Colonic mucosa (tissue), 4 donors: ENCODE measurements at regions of chr18 and their contacts with region 1.

Region 1: DNA sequence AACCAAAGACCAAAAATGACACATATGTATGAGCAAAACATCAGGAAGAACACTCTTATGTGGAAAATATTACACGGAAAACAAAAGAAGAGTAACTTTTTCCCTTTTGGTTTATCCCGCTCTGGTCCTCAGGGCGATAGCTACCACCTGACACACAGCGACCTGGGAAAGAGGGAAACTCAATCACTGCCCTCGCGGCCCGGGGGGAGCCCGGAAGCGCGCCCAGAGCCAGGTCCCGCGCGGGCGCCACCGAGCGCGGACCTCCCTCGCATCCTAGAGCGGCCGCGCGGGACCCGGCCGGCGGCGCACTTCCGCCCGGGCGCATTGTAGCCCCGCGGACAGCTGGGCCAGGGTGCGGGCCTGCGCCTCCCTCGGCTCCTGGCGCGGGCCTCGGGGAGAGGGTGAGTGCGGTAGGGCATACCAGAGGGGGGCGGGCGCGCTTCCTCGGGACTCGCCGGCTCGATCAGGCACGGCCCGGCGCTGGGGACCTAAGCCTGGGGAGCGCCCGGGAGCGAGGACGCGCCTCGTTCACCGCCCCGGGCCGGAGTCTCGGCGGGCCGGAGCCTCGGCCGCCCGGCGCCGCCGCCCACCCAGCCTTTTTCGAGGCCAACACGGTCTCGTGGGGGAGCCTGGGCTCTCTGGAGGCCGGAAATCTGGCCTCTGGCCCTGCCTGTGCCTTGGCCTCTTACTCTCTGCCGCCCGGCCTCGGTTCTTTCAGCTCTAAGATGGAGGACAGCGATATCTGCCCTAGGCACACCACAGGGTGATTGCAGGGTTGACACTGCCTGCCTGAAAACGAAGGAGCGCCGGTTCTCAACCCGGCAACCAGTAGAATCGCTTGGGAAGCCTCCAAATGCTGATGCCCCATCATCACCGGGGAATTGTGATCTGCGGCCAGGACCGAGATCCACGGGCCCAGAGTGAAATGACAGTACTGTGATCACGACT is at the start of gene ELAC1:
- DNase-seq: peak; percentile 72
- H3K4me3 ChIP-seq: peak within 1 kb of the TSS; percentile 96
- H3K27ac ChIP-seq: peak within 1 kb of the TSS; percentile 97
- H3K4me1 ChIP-seq: peaks cover 6% of the 10 kb centered on the region
- H3K27me3 ChIP-seq: no peaks in the 10 kb centered on the region
- CTCF ChIP-seq: no peak
- total RNA-seq, gene ELAC1: 7.0 to 11.3 TPM

Region 2: GRCh38 chr18:51029694-51030536 is 61.9 kb after region 1 on chr18 and contains the start of gene SMAD4:
- intact Hi-C with region 1: loop called (anchors 5 kb)
- DNase-seq: peak; percentile 99
- H3K4me3 ChIP-seq: peak within 1 kb of the TSS; percentile 44
- H3K27ac ChIP-seq: peak within 1 kb of the TSS; percentile 94
- H3K4me1 ChIP-seq: no peaks in the 10 kb centered on the region
- H3K27me3 ChIP-seq: no peaks in the 10 kb centered on the region
- CTCF ChIP-seq: no peak
- total RNA-seq, gene SMAD4: 74.0 to 106 TPM